Endothelial cell of umbilical vein (primary cell): ENCODE measurements at regions of chr19 and their contacts with region 1.

Region 1: GRCh38 chr19:5891938-5892771 is 11.4 kb downstream of the NDUFA11 start:
- DNase-seq: peak; percentile 33
- H3K4me3 ChIP-seq: no peak overlapping the region
- H3K27ac ChIP-seq: no peak overlapping the region
- H3K4me1 ChIP-seq: peaks cover 19% of the 10 kb centered on the region
- H3K27me3 ChIP-seq: no peaks in the 10 kb centered on the region
- CTCF ChIP-seq: peak; percentile 80 to 92
- POLR2A ChIP-seq: peak; percentile 35

Region 2: GRCh38 chr19:5844456-5845433 is 47.4 kb before region 1 on chr19:
- CTCF ChIA-PET with region 1: no interaction called
- POLR2A ChIA-PET with region 1: no interaction called
- dilution Hi-C with region 1: no loop called
- intact Hi-C with region 1: loop called (anchors 5 kb)
- DNase-seq: no peak
- H3K4me3 ChIP-seq: no peak overlapping the region
- H3K27ac ChIP-seq: no peak overlapping the region
- H3K4me1 ChIP-seq: no peaks in the 10 kb centered on the region
- H3K27me3 ChIP-seq: no peaks in the 10 kb centered on the region
- CTCF ChIP-seq: no peak
- POLR2A ChIP-seq: no peak

Region 3: GRCh38 chr19:5914921-5915781 is 23.0 kb after region 1 on chr19:
- CTCF ChIA-PET with region 1: no interaction called
- POLR2A ChIA-PET with region 1: no interaction called
- dilution Hi-C with region 1: no loop called
- intact Hi-C with region 1: no loop called
- DNase-seq: no peak
- H3K4me3 ChIP-seq: no peak overlapping the region
- H3K27ac ChIP-seq: no peak overlapping the region
- H3K4me1 ChIP-seq: no peaks in the 10 kb centered on the region
- H3K27me3 ChIP-seq: no peaks in the 10 kb centered on the region
- CTCF ChIP-seq: no peak
- POLR2A ChIP-seq: no peak